BJ (cell line): ENCODE measurements at regions of chr17 and their contacts with region 1.

Region 1: DNA sequence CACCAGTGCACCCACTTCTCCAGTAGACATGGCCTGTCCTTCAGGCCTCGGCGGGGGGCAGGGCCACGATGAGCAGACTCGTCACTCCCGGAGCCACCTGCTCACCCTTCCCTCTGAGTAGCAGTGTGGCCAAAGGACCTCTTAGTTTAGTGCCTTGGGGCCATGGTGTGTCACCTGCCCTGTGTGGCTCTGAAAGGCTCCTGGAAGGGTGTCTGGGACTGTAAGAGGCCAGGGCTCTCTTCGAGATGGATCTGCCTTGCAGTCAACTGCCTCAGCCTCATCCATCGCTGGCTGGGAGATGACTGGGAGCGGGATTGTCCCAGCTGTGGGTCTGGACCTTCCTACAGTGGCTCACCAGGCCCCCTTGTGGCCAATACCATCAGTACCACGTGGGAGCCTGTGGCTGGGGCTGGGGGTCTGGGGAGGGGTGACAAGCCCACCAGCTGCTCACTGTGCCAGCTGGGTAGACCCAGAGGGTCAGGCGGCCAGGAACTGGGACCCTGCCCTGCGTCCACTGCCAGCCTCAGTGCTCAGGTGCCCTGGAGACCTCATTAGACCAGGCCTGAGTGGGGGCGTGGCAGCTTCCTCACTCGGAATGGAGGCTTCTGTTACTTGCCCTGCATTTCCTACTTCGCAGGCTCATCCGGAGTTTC is 133.4 kb downstream of the OR1D5 start:
- DNase-seq: no peak
- H3K4me3 ChIP-seq: no peak overlapping the region
- H3K27me3 ChIP-seq: no peaks in the 10 kb centered on the region
- CTCF ChIP-seq: peak; percentile 79

Region 2: GRCh38 chr17:2853111-2853721 is 76.8 kb before region 1 on chr17:
- CTCF ChIA-PET with region 1: interaction called, 16 read pairs
- POLR2A ChIA-PET with region 1: no interaction called
- DNase-seq: no peak
- H3K4me3 ChIP-seq: peak overlapping the region; percentile 67
- H3K27me3 ChIP-seq: no peaks in the 10 kb centered on the region; the same call in 1 of the 2 replicates
- CTCF ChIP-seq: no peak

Region 3: DNA sequence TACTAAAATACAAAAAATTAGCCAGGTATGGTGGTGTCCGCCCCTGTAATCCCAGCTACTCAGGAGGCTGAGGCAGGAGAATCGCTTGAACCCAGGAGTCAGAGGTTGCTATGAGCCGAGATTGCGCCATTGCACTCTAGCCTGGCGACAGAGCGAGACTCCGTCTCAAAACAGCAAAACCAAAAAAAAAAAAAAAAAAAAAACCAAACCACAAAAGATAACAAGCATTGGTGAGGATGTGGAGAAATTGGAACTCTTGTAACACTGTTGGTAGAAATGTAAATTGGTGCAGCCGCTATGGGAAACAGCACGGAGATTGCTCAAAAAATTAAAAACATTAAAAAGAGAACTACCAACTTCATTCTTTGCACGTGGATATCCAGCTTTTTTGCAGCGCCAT is 14.0 kb after region 1 on chr17:
- CTCF ChIA-PET with region 1: interaction called, 12 read pairs
- POLR2A ChIA-PET with region 1: no interaction called
- DNase-seq: no peak
- H3K4me3 ChIP-seq: no peak overlapping the region
- H3K27me3 ChIP-seq: no peaks in the 10 kb centered on the region
- CTCF ChIP-seq: no peak